ENCODE measurements at regions of chr7 and their contacts with region 1.

Region 1: GRCh38 chr7:76020031-76020714 is 25.8 kb upstream of the TMEM120A start:
- DNase-seq: peak; percentile 20
- H3K4me3 ChIP-seq: no peak overlapping the region
- H3K27ac ChIP-seq: no peak overlapping the region
- H3K4me1 ChIP-seq: no peaks in the 10 kb centered on the region
- H3K27me3 ChIP-seq: no peaks in the 10 kb centered on the region
- CTCF ChIP-seq: peak; percentile 68 to 81

Region 2: DNA sequence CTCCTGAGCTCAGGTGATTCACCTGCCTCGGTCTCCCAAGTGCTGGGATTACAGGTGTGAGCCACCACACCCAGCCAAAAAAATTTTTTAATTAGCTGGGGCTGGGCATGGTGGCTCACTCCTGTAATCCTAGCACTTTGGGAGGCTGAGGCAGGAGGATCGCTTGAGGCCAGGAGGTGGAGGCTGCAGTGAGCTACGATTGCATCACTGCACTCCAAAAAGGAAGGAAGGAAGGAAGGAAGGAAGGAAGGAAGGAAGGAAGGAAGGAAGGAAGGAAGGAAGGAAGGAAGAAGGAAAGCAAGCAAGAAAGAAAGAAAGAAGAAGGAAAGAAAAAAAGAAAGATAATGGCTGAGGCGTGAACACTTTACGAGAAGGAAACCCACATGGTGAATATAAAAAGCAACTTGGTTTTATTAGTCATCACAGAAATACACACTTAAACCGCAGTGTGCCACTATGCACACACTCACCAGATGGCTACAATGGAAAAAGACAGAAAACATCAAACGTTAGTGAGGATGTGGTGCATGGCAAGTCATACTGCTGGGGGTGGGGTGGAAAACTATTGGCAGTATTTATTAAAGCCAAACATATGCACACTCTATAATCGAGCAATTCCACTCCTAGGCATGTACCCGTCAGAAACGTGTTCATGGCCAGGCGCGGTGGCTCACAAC is 243.7 kb before region 1 on chr7:
- CTCF ChIA-PET with region 1: no interaction called
- dilution Hi-C with region 1: no loop called
- in situ Hi-C with region 1: no loop called
- intact Hi-C with region 1: loop called (anchors 10 kb)
- DNase-seq: peak; percentile 54
- H3K4me3 ChIP-seq: no peak overlapping the region
- H3K27ac ChIP-seq: no peak overlapping the region
- H3K4me1 ChIP-seq: peaks cover 4% of the 10 kb centered on the region
- H3K27me3 ChIP-seq: no peaks in the 10 kb centered on the region
- CTCF ChIP-seq: no peak